ENCODE measurements at regions of chr15 and their contacts with region 1.

Region 1: DNA sequence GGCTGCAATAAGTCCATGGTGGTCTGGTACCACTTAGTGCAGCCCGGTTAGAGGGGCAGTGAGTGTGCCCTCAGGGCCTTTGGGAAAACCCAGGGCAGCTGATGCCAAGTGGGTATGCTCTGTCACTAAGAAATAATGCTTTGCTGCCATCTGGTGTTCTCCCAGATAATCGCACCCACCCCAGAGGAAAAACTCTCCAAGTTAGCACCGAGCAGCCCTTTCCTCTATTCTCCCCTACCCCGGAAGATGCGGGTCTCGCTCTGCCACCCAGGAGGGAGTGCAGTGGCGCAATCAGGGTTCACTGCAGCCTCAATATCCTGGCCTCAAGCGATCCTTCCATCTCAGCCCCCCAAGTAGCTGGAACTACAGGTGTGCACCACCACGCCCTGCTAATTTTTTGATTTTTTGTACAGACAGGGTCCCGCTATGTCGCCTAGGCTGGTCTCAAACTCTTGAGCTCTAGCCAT is 21.3 kb upstream of the DAPK2 start:
- DNase-seq: no peak

Region 2: GRCh38 chr15:63752075-63752684 is 315.4 kb before region 1 on chr15:
- intact Hi-C with region 1: loop called (anchors 5 kb)
- DNase-seq: no peak

Region 3: GRCh38 chr15:64112904-64113303 is 45.3 kb after region 1 on chr15:
- intact Hi-C with region 1: loop called in 1 of 2 experiments (anchors 2 kb)
- DNase-seq: no peak

Measured in posterior vena cava (tissue), 2 donors.